Vagina (tissue), 2 donors: ENCODE measurements at regions of chr1 and their contacts with region 1.

Region 1: GRCh38 chr1:44775078-44775929 is at the start of gene RPS8:
- DNase-seq: no peak
- H3K4me3 ChIP-seq: peak within 1 kb of the TSS; percentile 71 to 85
- H3K27ac ChIP-seq: peak within 1 kb of the TSS; percentile 96
- H3K4me1 ChIP-seq: peaks cover 26% of the 10 kb centered on the region
- H3K27me3 ChIP-seq: no peaks in the 10 kb centered on the region
- CTCF ChIP-seq: peak in 1 of 3 experiments; percentile 16
- POLR2A ChIP-seq: peak in 1 of 2 donors; percentile 89
- total RNA-seq, gene RPS8: 2,511 TPM

Region 2: GRCh38 chr1:43776043-43776761 is 999.1 kb before region 1 on chr1:
- intact Hi-C with region 1: no loop called
- DNase-seq: no peak
- H3K4me3 ChIP-seq: no peak overlapping the region
- H3K27ac ChIP-seq: no peak overlapping the region
- H3K4me1 ChIP-seq: peaks cover 6% of the 10 kb centered on the region
- H3K27me3 ChIP-seq: no peaks in the 10 kb centered on the region
- CTCF ChIP-seq: no peak
- POLR2A ChIP-seq: no peak

Region 3: DNA sequence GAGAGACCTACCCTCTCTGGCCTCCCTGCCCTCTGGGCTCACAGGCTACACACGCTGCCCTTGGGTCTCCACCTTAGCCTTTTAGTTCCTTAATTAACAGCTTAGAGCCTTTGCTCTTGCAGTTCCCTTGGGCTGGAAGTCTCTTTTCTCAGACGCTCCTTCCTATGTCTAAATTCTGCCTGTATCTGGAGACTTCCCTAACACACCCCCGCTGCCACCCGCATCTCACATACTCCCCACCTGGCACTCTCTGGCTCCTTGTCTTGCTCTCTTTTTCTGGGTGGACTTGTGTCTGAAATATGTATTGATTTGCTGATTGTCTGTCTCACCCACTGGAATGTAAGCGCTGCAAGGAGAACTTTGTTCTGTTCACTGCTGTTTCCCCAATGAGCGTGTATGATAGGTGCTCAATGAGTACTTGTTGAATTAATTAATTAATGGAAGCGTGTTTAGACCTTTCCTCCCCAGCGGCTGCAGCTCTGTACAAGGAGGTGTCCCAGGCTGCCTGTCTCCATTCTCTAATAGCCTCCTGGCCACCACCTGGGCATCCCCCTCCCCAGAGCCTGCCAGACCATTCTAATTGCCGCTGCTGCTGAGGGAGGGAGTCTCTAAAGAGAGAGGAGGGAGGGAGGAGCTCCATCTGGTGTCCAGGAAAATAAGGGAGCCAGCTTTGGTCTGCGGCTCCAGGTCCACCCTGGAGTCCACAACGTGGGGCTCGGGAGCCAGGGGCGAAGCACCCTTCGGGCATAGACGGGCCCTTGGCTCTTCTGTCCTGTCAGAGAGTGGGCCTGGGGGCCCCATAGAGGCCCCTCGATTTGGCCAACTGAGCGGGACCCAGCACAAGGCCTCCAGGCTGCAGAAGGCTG is 274.9 kb before region 1 on chr1:
- intact Hi-C with region 1: no loop called
- DNase-seq: no peak
- H3K4me3 ChIP-seq: no peak overlapping the region
- H3K27ac ChIP-seq: no peak overlapping the region
- H3K4me1 ChIP-seq: no peaks in the 10 kb centered on the region
- H3K27me3 ChIP-seq: no peaks in the 10 kb centered on the region
- CTCF ChIP-seq: no peak
- POLR2A ChIP-seq: no peak

Region 4: GRCh38 chr1:44739361-44740178 is 35.7 kb before region 1 on chr1 and contains the start of gene KIF2C:
- intact Hi-C with region 1: loop called (anchors 5 kb)
- DNase-seq: peak in 1 of 2 donors; percentile 95
- H3K4me3 ChIP-seq: peak within 1 kb of the TSS; percentile 53 to 66
- H3K27ac ChIP-seq: peak within 1 kb of the TSS; percentile 85
- H3K4me1 ChIP-seq: peaks cover 8% of the 10 kb centered on the region
- H3K27me3 ChIP-seq: no peaks in the 10 kb centered on the region
- CTCF ChIP-seq: no peak
- POLR2A ChIP-seq: peak in 1 of 2 donors; percentile 42
- total RNA-seq, gene KIF2C: 3.4 TPM